Prostate gland (tissue), 2 donors: ENCODE measurements at regions of chr3 and their contacts with region 1.

Region 1: DNA sequence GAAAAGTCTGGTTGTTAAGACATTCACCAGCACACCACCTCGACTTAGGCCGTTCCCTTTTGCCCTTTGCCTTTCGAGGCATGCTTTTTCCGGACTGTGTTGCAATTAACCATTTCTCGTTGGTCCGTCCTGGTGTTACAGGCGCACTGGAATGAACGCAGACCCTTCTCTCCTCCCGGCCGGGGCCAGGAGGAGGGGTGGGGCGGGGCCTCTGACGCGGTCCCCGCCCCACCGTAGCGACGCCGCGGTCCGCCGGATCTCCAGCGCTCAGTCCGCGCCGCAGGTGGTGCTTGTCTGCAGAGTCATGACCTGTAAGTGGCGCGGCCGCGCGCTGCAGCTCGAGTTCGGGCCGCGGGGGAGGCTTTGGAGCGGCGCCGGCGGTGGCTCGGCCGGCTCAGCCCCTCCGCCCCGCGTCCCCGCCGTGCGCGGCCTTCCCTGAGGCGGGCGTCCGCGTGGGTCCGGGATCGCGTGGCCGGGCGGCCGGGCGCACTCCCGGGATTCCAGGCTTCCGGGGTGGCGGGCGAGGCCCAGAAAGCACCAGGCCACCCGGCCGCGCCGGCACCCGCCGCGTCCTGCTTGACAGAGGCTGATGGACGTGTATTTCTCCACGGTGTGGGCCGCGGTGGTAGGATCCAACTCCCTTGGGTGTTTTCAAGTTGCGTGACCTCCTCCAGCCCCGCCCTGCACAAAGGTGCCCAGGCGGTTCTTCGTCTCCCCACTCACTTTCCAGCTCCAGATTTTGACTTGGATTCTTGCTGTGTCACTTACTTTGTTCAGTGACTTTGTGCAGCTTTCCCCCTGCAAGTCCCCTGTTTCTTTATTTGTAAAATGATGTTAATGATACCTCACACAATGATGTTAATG is at the start of gene NIT2:
- DNase-seq: peak; percentile 77
- H3K4me3 ChIP-seq: peak within 1 kb of the TSS; percentile 61 to 77
- H3K27ac ChIP-seq: peak within 1 kb of the TSS; percentile 79 to 82
- H3K4me1 ChIP-seq: no peaks in the 10 kb centered on the region
- H3K27me3 ChIP-seq: no peaks in the 10 kb centered on the region
- CTCF ChIP-seq: peak in 1 of 4 experiments; percentile 24
- POLR2A ChIP-seq: peak; percentile 58
- total RNA-seq, gene NIT2: 21.4 to 32.4 TPM

Region 2: GRCh38 chr3:100068826-100069225 is 265.9 kb before region 1 on chr3:
- intact Hi-C with region 1: no loop called
- DNase-seq: peak; percentile 48
- H3K4me3 ChIP-seq: no peak overlapping the region
- H3K27ac ChIP-seq: no peak overlapping the region
- H3K4me1 ChIP-seq: peaks cover 3% of the 10 kb centered on the region
- H3K27me3 ChIP-seq: no peaks in the 10 kb centered on the region
- CTCF ChIP-seq: peak; percentile 60 to 68 (median 68)
- POLR2A ChIP-seq: no peak

Region 3: DNA sequence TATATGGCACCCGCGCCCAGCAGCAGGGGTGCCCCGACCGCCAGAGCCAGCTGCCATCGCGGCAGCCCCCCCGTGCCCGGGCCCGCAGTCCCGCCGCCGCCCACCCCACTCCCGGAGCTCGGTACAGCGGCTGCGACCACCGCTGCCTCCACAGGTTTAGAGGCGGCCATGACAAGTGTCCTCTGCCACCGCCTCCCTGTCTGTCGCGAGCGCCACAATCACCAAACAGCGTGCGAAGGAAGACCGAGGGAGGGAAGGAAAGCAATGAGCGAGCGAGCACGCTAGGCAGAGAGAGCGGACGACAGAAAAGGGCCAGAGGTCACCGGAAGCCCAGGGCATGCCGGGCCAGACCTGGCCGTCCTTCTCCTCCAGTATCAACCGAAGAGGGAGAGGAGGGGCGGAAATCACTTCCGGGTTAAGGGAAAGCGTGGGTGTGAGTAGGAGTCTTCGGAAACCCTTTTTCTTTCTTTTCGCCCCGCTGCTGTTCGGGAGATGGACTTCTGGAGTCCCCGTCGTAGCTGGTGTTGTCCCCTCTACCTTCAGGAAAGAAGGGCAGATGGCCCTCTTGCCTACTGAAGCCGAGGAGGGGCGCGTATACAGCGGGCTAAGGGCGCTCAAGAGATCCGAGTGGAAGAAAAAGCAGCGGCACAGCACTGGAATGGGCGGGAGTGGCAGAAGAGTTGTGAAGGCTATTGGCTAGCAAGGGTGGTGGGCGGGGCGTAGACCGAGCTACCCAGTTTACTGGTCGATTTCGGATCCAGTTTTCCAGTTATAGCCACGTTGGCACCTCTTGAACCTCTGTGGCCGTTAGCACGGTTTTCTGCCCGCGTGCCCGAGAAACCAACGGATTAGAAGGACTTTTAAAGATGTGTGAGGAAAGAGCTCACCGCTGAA is 66.3 kb after region 1 on chr3 and contains the starts of genes LNP1 and TOMM70:
- intact Hi-C with region 1: loop called (anchors 10 kb)
- DNase-seq: peak; percentile 97
- H3K4me3 ChIP-seq: peak within 1 kb of the TSS; percentile 59 to 95
- H3K27ac ChIP-seq: peak within 1 kb of the TSS; percentile 83 to 89
- H3K4me1 ChIP-seq: no peaks in the 10 kb centered on the region
- H3K27me3 ChIP-seq: no peaks in the 10 kb centered on the region
- CTCF ChIP-seq: no peak
- POLR2A ChIP-seq: no peak
- total RNA-seq, gene LNP1: 0.73 to 3.4 TPM
- total RNA-seq, gene TOMM70: 34.0 to 36.1 TPM